Dendritic cell treated with granulocyte-macrophage colony-stimulating factor and Interleukin-4, amounts not matched to agents 40 ng/mL and 50 ng/mL, for 4 days (primary cell): ENCODE measurements at regions of chr5 and their contacts with region 1.

Region 1: GRCh38 chr5:60295423-60295822 is 401.9 kb upstream of the PDE4D start:
- H3K4me3 Mint-ChIP-seq: no peak overlapping the region
- H3K27ac Mint-ChIP-seq: no peak overlapping the region
- H3K4me1 Mint-ChIP-seq: peaks cover 14% of the 10 kb centered on the region
- H3K27me3 Mint-ChIP-seq: no peaks in the 10 kb centered on the region

Region 2: GRCh38 chr5:60350794-60351193 is 55.4 kb after region 1 on chr5:
- intact Hi-C with region 1: no loop called
- H3K4me3 Mint-ChIP-seq: no peak overlapping the region
- H3K27ac Mint-ChIP-seq: no peak overlapping the region
- H3K4me1 Mint-ChIP-seq: no peaks in the 10 kb centered on the region
- H3K27me3 Mint-ChIP-seq: no peaks in the 10 kb centered on the region

Region 3: GRCh38 chr5:60649283-60649917 is 354.0 kb after region 1 on chr5:
- intact Hi-C with region 1: loop called (anchors 5 kb)
- H3K4me3 Mint-ChIP-seq: no peak overlapping the region
- H3K27ac Mint-ChIP-seq: no peak overlapping the region
- H3K4me1 Mint-ChIP-seq: peaks cover 9% of the 10 kb centered on the region
- H3K27me3 Mint-ChIP-seq: no peaks in the 10 kb centered on the region

Region 4: DNA sequence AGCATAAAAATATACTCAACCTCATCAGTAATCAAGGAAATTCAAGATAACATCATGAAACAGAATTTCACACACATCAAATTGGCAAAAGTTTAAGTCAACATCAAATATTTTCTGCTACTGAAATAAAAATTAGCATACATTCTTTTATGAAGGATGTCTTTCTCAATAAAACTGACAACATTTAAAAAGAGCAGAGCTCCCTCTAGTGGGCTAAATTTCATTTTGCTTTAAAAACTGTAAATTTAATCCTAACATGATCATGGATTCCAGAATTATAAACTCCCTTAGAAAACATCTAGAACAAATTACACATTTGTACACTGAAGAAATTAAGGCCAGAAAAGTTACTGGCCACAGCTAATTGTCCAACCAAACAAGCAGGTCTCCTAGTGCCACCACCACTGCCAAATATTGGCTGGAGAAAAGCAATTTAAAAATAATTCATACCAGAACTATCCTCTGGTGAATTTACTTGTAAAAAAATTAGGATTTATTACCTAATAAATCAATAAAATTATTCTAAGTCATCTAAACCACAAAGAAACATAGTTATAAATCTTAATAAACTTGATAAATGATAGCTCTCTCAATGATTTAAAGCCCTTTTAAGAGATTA is 373.4 kb after region 1 on chr5:
- intact Hi-C with region 1: loop called (anchors 5 kb)
- H3K4me3 Mint-ChIP-seq: no peak overlapping the region
- H3K27ac Mint-ChIP-seq: no peak overlapping the region
- H3K4me1 Mint-ChIP-seq: peaks cover 17% of the 10 kb centered on the region
- H3K27me3 Mint-ChIP-seq: no peaks in the 10 kb centered on the region